Naive thymus-derived CD4-positive, alpha-beta T cell (primary cell): ENCODE measurements at regions of chr17 and their contacts with region 1.

Region 1: GRCh38 chr17:75855310-75856081 is at the start of gene WBP2:
- DNase-seq: peak; percentile 82 to 100 (median 98)
- ATAC-seq: peak; percentile 94
- H3K4me3 ChIP-seq: peak within 1 kb of the TSS; percentile 93
- H3K4me3 Mint-ChIP-seq: peak within 1 kb of the TSS in 2 of 10 donors; percentile 89 to 92
- H3K27ac ChIP-seq: peak within 1 kb of the TSS; percentile 88
- H3K27ac Mint-ChIP-seq: peak within 1 kb of the TSS in 6 of 9 donors; percentile 84 to 95 (median 90)
- H3K4me1 ChIP-seq: peaks cover 19 to 25% of the 10 kb centered on the region in 2 donors
- H3K4me1 Mint-ChIP-seq: peaks cover 19 to 47% (median 39%) of the 10 kb centered on the region in 7 donors
- H3K27me3 ChIP-seq: no peaks in the 10 kb centered on the region
- H3K27me3 Mint-ChIP-seq: no peaks in the 10 kb centered on the region
- total RNA-seq, gene WBP2: 87.7 to 159 (median 112) TPM

Region 2: GRCh38 chr17:75250009-75250471 is 605.5 kb before region 1 on chr17:
- CTCF ChIA-PET with region 1: no interaction called
- POLR2A ChIA-PET with region 1: interaction called, 10 read pairs
- intact Hi-C with region 1: no loop called
- DNase-seq: peak in 6 of 9 donors; percentile 30 to 80 (median 36)
- ATAC-seq: peak; percentile 85
- H3K4me3 ChIP-seq: peak overlapping the region; percentile 40
- H3K4me3 Mint-ChIP-seq: peak overlapping the region; percentile 57 to 89 (median 72)
- H3K27ac ChIP-seq: peak overlapping the region; percentile 64
- H3K27ac Mint-ChIP-seq: peak overlapping the region; percentile 81 to 99 (median 90)
- H3K4me1 ChIP-seq: peaks cover 9 to 15% of the 10 kb centered on the region in 2 donors
- H3K4me1 Mint-ChIP-seq: peaks cover 35 to 57% (median 52%) of the 10 kb centered on the region in 7 donors
- H3K27me3 ChIP-seq: no peaks in the 10 kb centered on the region
- H3K27me3 Mint-ChIP-seq: no peaks in the 10 kb centered on the region

Region 3: DNA sequence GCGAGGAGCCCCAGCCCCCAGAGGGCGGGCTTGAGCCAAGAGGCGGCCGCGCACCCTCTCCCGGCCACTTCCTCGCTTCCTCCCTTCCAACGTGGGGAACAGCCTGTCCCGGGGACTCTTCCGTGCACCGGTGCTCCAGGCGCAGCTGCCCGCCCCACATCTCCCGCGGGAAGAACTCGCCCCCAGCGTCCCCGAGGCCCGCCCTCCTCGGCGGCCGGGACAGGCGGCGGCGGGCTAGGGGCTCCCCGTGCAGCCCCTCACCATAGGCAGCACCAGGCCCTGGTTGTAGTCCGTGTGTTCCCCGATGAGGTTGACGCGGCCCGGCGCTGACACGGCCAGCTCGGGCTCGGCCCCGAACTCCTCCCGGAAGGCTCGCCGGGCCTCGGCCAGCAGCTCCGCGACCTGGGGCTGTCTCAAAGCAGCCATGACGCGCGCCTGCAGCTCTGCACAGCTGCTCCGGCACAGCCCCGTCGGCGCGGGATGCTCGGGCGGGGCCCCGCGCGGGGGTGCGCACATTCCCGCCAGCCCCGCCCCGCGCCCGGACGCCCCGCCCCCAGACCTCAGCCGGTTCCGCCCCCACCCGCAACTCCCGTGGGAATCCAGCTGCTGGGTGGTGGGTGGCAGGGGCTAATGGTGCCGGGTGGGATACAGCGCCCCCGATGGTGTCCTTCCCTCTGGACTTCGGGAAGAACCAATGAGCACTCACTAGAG is 90.6 kb before region 1 on chr17 and contains the start of gene GALK1:
- CTCF ChIA-PET with region 1: interaction called, 4 read pairs
- POLR2A ChIA-PET with region 1: interaction called, 18 read pairs
- intact Hi-C with region 1: no loop called
- DNase-seq: peak; percentile 56 to 78 (median 67)
- ATAC-seq: peak; percentile 97
- H3K4me3 ChIP-seq: peak within 1 kb of the TSS; percentile 71
- H3K4me3 Mint-ChIP-seq: peak within 1 kb of the TSS; percentile 62 to 84 (median 75)
- H3K27ac ChIP-seq: peak within 1 kb of the TSS; percentile 67
- H3K27ac Mint-ChIP-seq: peak within 1 kb of the TSS; percentile 32 to 87 (median 70)
- H3K4me1 ChIP-seq: peaks cover 11% of the 10 kb centered on the region in 2 donors
- H3K4me1 Mint-ChIP-seq: peaks cover 0 to 21% (median 10%) of the 10 kb centered on the region in 7 donors
- H3K27me3 ChIP-seq: no peaks in the 10 kb centered on the region
- H3K27me3 Mint-ChIP-seq: no peaks in the 10 kb centered on the region
- total RNA-seq, gene GALK1: 9.9 to 42.9 (median 22.1) TPM

Region 4: GRCh38 chr17:75827252-75828115 is 28.0 kb before region 1 on chr17:
- CTCF ChIA-PET with region 1: interaction called, 16 read pairs
- POLR2A ChIA-PET with region 1: interaction called, 37 read pairs
- intact Hi-C with region 1: loop called in 1 of 2 experiments (anchors 2 kb)
- DNase-seq: peak; percentile 41 to 66 (median 61)
- ATAC-seq: peak; percentile 76
- H3K4me3 ChIP-seq: peak overlapping the region; percentile 30
- H3K4me3 Mint-ChIP-seq: peak overlapping the region; percentile 37 to 74 (median 56)
- H3K27ac ChIP-seq: peak overlapping the region; percentile 67
- H3K27ac Mint-ChIP-seq: peak overlapping the region; percentile 6 to 91 (median 76)
- H3K4me1 ChIP-seq: peaks cover 8% of the 10 kb centered on the region in 2 donors
- H3K4me1 Mint-ChIP-seq: peaks cover 5 to 16% (median 11%) of the 10 kb centered on the region in 7 donors
- H3K27me3 ChIP-seq: no peaks in the 10 kb centered on the region
- H3K27me3 Mint-ChIP-seq: no peaks in the 10 kb centered on the region

Region 5: DNA sequence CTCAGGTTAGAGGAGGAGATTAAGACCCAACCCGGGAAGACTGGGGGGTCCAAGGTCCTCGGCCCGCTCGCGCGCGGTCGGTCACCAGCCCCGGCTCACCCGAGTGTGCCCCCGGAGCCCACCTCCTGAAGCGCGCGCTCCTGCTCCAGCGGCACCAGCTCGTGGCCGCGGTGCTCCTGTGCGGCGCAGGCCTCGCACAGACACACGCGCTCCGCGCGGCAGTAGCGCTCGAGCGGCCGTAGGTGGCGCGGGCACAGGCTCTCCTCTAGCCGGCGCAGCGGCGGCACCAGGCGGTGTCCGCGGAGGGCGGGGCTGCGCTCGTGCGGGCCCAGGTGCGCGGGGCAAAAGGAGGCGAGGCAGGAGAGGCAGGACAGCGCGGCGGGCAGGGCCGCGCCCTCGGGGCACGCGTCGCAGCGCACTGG is 22.3 kb after region 1 on chr17:
- CTCF ChIA-PET with region 1: interaction called, 25 read pairs
- POLR2A ChIA-PET with region 1: interaction called, 354 read pairs
- intact Hi-C with region 1: loop called (anchors 1 kb)
- DNase-seq: peak; percentile 56 to 77 (median 69)
- ATAC-seq: peak; percentile 89
- H3K4me3 ChIP-seq: peak overlapping the region; percentile 74
- H3K4me3 Mint-ChIP-seq: peak overlapping the region; percentile 83 to 99 (median 90)
- H3K27ac ChIP-seq: peak overlapping the region; percentile 70
- H3K27ac Mint-ChIP-seq: peak overlapping the region; percentile 67 to 97 (median 89)
- H3K4me1 ChIP-seq: peaks cover 25 to 30% of the 10 kb centered on the region in 2 donors
- H3K4me1 Mint-ChIP-seq: peaks cover 28 to 57% (median 50%) of the 10 kb centered on the region in 7 donors
- H3K27me3 ChIP-seq: no peaks in the 10 kb centered on the region
- H3K27me3 Mint-ChIP-seq: peaks cover 0 to 28% (median 0%) of the 10 kb centered on the region in 5 donors

Region 6: DNA sequence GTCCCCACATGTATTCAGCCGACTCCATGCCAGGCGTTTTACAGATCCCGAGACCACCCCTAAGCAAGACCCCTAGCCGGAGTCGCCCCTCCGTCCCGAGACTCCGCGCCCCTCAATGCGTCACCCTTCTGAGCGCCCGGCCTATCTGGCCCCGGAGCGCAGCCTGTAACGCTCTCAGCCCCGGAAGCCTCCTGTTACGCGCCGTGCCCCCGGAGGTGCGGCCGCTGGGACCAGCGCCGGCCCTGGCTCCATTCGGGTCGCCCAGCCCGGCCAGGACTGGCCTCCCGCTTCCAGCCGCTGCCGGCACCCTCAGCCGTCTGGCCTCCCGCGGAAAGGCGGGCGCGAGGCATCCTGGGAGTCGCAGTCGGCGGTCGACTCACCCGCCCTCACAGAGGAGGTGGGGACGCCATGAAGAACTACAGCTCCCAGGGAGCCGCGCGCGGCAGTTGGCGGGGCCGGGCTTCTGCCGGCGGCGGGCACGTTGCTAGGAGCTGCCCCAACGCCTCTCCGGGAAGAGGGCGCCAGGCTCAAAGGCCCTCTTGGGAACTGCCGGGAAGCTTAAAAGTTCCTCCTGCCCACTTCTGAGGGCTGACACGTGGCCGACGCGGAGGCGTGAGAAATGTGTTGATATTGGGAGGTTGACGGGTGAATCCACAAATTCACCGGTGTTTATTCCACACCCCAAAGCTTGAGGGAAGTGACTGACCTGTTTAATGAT is 85.4 kb after region 1 on chr17 and contains the start of gene FBF1:
- CTCF ChIA-PET with region 1: no interaction called
- POLR2A ChIA-PET with region 1: interaction called, 4 read pairs
- intact Hi-C with region 1: loop called in 1 of 2 experiments (anchors 1 kb)
- DNase-seq: peak; percentile 74 to 92 (median 82)
- ATAC-seq: peak; percentile 100
- H3K4me3 ChIP-seq: peak within 1 kb of the TSS; percentile 89
- H3K4me3 Mint-ChIP-seq: peak within 1 kb of the TSS; percentile 77 to 93 (median 90)
- H3K27ac ChIP-seq: peak within 1 kb of the TSS; percentile 86
- H3K27ac Mint-ChIP-seq: peak within 1 kb of the TSS; percentile 74 to 94 (median 89)
- H3K4me1 ChIP-seq: peaks cover 5 to 11% of the 10 kb centered on the region in 2 donors
- H3K4me1 Mint-ChIP-seq: peaks cover 9 to 19% (median 11%) of the 10 kb centered on the region in 7 donors
- H3K27me3 ChIP-seq: no peaks in the 10 kb centered on the region
- H3K27me3 Mint-ChIP-seq: no peaks in the 10 kb centered on the region
- total RNA-seq, gene FBF1: 19.9 to 48.1 (median 29.0) TPM

Region 7: DNA sequence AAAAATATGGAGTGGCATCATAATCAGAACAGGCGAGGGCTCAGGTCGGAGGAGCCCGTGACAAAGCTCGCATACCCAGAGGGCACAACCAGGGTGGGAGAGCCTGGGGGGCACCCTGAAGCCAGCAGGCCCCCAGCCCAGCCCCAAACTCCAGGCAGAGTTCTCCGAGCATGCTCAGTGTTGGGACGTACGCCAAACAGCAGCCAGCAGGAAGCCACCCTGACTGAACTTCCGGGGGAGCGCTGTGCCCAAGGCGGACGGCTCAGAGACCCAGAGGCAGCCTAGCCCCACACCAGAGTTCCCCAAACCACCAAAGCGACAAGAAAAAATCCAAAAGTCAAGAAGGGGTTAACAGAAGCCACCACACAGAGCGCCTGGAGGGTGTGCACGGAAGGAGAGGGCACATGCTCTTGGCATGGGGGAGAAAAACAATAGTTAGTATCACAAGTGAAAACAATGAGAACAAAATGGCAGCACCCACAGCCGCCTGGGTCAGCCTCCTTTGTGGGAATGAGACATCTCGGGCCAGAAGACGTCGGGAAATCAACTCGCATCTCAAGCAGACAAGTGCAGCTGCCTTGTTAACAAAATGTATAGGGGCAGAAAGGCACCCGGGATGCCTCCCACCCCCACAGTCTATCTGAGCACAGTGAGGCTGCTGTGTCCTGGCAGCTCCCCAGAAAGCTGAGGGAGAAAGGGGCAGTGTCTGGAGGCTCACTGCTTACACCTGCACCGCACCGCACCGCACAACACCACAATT is 236.2 kb after region 1 on chr17:
- CTCF ChIA-PET with region 1: no interaction called
- POLR2A ChIA-PET with region 1: no interaction called
- intact Hi-C with region 1: no loop called
- DNase-seq: peak in 3 of 9 donors; percentile 23 to 50 (median 39)
- ATAC-seq: peak; percentile 71
- H3K4me3 ChIP-seq: no peak overlapping the region
- H3K4me3 Mint-ChIP-seq: peak overlapping the region in 9 of 10 donors; percentile 35 to 75 (median 70)
- H3K27ac ChIP-seq: peak overlapping the region; percentile 50
- H3K27ac Mint-ChIP-seq: peak overlapping the region; percentile 76 to 93 (median 90)
- H3K4me1 ChIP-seq: no peaks in the 10 kb centered on the region
- H3K4me1 Mint-ChIP-seq: peaks cover 0 to 11% (median 9%) of the 10 kb centered on the region in 7 donors
- H3K27me3 ChIP-seq: no peaks in the 10 kb centered on the region
- H3K27me3 Mint-ChIP-seq: no peaks in the 10 kb centered on the region

Region 8: DNA sequence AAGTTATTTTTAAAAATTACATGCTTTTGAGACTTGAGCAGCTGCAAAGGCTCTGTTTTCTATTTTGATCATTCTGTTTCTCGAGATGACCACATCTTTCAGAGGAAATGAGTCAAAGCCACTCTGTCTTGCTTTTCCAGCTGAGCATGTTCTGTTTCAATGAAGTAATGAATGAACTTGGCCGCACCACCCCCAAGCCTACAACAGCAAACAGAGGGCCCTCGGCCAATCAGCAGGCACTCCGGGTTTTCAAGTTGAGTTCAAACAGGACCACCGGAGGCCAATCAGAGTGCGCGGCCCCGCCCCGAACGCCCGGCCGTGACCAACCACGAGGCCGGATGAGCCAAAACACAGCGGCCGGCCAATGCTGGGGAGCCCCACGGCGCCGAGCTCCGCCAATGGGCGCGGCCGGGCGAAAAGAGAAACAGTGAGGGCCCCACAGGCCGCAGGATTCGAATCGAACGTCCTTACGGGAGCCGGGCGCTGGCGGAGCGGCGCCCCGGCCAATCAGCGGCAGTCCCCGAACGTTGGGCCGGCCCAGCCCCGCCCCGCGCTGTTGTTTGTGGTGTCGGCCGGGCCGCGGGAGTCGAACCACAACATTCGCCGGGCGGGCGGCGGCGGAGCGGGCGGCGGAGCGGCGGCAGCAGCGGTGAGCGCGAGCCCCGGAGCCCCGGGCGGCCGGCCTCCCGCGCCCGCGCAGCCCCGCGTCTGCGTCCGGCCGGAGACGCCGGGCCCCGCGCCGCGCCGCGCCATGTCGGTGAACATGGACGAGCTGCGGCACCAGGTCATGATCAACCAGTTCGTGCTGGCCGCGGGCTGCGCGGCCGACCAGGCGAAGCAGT is 409.5 kb after region 1 on chr17 and contains the start of gene UBALD2:
- CTCF ChIA-PET with region 1: no interaction called
- POLR2A ChIA-PET with region 1: no interaction called
- intact Hi-C with region 1: loop called in 1 of 2 experiments (anchors 2 kb)
- DNase-seq: peak; percentile 95 to 99 (median 98)
- ATAC-seq: peak; percentile 90
- H3K4me3 ChIP-seq: peak within 1 kb of the TSS; percentile 71
- H3K4me3 Mint-ChIP-seq: peak within 1 kb of the TSS; percentile 87 to 95 (median 92)
- H3K27ac ChIP-seq: peak within 1 kb of the TSS; percentile 92
- H3K27ac Mint-ChIP-seq: peak within 1 kb of the TSS; percentile 81 to 98 (median 94)
- H3K4me1 ChIP-seq: peaks cover 46 to 58% of the 10 kb centered on the region in 2 donors
- H3K4me1 Mint-ChIP-seq: peaks cover 47 to 70% (median 61%) of the 10 kb centered on the region in 7 donors
- H3K27me3 ChIP-seq: no peaks in the 10 kb centered on the region
- H3K27me3 Mint-ChIP-seq: peaks cover 0 to 3% (median 0%) of the 10 kb centered on the region in 5 donors
- total RNA-seq, gene UBALD2: 103 to 263 (median 241) TPM